ENCODE measurements at regions of chr6 and their contacts with region 1.

Region 1: GRCh38 chr6:33607784-33608161 is 13.3 kb upstream of the ITPR3 start:
- DNase-seq: no peak
- ATAC-seq: no peak
- H3K4me3 Mint-ChIP-seq: no peak overlapping the region
- H3K27ac Mint-ChIP-seq: no peak overlapping the region
- H3K4me1 Mint-ChIP-seq: peaks cover 45% of the 10 kb centered on the region
- H3K27me3 Mint-ChIP-seq: no peaks in the 10 kb centered on the region; the same call in 1 of the 2 replicates
- CTCF ChIP-seq: no peak

Region 2: DNA sequence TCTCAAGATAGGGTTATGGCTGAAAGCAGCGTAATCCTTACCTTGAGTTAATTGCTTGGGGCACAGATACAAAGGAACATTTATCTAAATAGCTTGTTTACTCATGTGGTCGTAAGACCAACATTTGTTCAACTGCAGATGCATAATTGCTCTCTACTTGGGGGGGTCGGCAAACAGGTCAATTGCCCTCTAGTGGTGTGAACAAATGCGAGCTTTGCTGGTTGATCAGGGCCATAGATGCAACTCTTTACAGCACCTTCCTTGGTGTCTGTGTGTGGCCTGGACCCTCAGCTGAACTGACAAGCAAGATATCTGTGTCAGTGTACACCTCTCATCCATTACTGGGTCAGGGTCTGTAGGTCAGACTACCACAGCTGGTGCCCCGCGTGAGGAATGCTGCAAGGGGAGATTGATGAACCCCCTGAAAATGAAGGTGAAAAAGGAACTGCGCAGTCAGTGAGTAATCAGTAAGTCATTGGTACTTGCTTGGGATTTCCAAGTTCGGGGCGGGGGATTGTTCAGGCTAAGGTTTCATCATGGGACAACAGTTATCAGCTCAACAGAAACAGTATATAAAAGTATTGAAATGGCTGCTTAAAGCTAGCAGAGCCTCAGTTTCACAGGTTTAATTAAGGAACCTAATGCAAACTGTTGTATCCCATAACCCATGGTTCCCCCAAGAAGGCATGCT is 558.3 kb before region 1 on chr6:
- CTCF ChIA-PET with region 1: no interaction called
- POLR2A ChIA-PET with region 1: no interaction called
- DNase-seq: no peak
- ATAC-seq: peak; percentile 71
- H3K4me3 Mint-ChIP-seq: no peak overlapping the region
- H3K27ac Mint-ChIP-seq: no peak overlapping the region
- H3K4me1 Mint-ChIP-seq: peaks cover 46% of the 10 kb centered on the region
- H3K27me3 Mint-ChIP-seq: peaks cover 1% of the 10 kb centered on the region; the same call in 1 of the 2 replicates
- CTCF ChIP-seq: peak; percentile 26; the same call in 1 of the 2 replicates

Region 3: DNA sequence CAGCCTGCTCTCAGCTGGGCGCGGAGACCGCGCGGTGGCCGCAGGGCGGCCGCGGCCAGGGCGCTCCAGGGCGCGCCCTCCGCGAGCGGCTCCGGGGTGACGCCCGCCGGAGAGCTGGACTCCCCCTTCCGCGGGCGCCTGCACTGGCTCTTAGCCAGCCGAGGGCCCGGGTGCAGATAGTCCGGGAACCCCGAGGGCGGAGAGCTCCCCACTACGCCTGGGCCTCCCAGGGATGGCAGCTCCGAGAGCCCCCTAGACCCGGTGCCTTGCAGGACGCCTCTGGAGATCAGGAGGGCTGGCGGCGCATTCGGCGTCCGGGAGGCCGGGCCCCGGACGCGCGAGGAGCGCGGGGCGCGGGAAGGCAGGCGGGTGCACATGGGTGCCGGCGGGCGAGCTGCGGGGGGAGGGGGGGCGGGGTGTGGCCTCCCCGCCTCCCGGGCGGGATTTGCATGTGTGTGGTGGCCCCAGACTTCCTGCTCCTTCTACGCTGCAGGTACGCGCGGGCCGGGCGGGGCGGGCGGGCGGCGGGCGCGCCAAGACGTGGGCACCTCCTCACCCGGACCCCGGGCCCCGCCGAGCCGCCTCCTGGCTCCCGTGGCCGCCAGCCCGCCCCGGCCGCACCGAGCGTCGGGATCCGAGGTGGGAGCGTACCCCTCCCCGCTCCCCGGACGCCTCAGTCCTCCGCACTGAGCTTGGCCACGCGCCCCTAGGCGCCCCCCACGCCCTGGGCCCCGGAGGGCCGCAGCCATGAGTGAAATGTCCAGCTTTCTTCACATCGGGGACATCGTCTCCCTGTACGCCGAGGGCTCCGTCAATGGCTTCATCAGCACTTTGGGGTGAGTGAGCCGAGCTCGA is 13.3 kb after region 1 on chr6 and contains the start of gene ITPR3:
- CTCF ChIA-PET with region 1: interaction called, 27 read pairs
- POLR2A ChIA-PET with region 1: interaction called, 11 read pairs
- DNase-seq: no peak
- ATAC-seq: peak; percentile 47
- H3K4me3 Mint-ChIP-seq: peak within 1 kb of the TSS; percentile 91
- H3K27ac Mint-ChIP-seq: no peak within 1 kb of the TSS; the same call in 1 of the 2 replicates
- H3K4me1 Mint-ChIP-seq: peaks cover 46% of the 10 kb centered on the region
- H3K27me3 Mint-ChIP-seq: peaks cover 15% of the 10 kb centered on the region
- CTCF ChIP-seq: no peak
- total RNA-seq, gene ITPR3: 42.5 to 47.3 TPM (median 42.9 TPM) in 3 replicates

Region 4: GRCh38 chr6:33633462-33634158 is 25.8 kb after region 1 on chr6:
- CTCF ChIA-PET with region 1: interaction called, 23 read pairs
- POLR2A ChIA-PET with region 1: no interaction called
- DNase-seq: peak; percentile 58
- ATAC-seq: peak; percentile 69
- H3K4me3 Mint-ChIP-seq: peak overlapping the region; percentile 83
- H3K27ac Mint-ChIP-seq: peak overlapping the region; percentile 47
- H3K4me1 Mint-ChIP-seq: peaks cover 59% of the 10 kb centered on the region
- H3K27me3 Mint-ChIP-seq: peaks cover 9% of the 10 kb centered on the region; the same call in 1 of the 2 replicates
- CTCF ChIP-seq: no peak